IMR-90 (cell line): ENCODE measurements at regions of chr5 and their contacts with region 1.

Region 1: GRCh38 chr5:150469718-150470469 is 20.4 kb upstream of the RPS14 start:
- DNase-seq: peak; percentile 98
- ATAC-seq: peak; percentile 82
- H3K4me3 ChIP-seq: no peak overlapping the region
- H3K27ac ChIP-seq: peak overlapping the region; percentile 81
- H3K4me1 ChIP-seq: peaks cover 26% of the 10 kb centered on the region
- H3K27me3 ChIP-seq: no peaks in the 10 kb centered on the region
- CTCF ChIP-seq: no peak
- POLR2A ChIP-seq: no peak
- RAD21 ChIP-seq: no peak; the same call in 1 of the 2 replicates

Region 2: GRCh38 chr5:150486402-150487198 is 16.7 kb after region 1 on chr5:
- CTCF ChIA-PET with region 1: no interaction called
- POLR2A ChIA-PET with region 1: interaction called, 16 read pairs
- dilution Hi-C with region 1: no loop called
- in situ Hi-C with region 1: no loop called
- intact Hi-C with region 1: loop called (anchors 2 kb)
- DNase-seq: peak; percentile 48
- ATAC-seq: peak; percentile 9
- H3K4me3 ChIP-seq: peak overlapping the region; percentile 99
- H3K27ac ChIP-seq: peak overlapping the region; percentile 100
- H3K4me1 ChIP-seq: peaks cover 40% of the 10 kb centered on the region
- H3K27me3 ChIP-seq: no peaks in the 10 kb centered on the region
- CTCF ChIP-seq: peak; percentile 12; the same call in 1 of the 2 replicates
- POLR2A ChIP-seq: no peak
- RAD21 ChIP-seq: peak; percentile 28; the same call in 1 of the 2 replicates

Region 3: GRCh38 chr5:150517272-150518152 is 47.6 kb after region 1 on chr5:
- CTCF ChIA-PET with region 1: interaction called, 3 read pairs
- POLR2A ChIA-PET with region 1: no interaction called
- dilution Hi-C with region 1: no loop called
- in situ Hi-C with region 1: no loop called
- intact Hi-C with region 1: loop called (anchors 2 kb)
- DNase-seq: peak; percentile 98
- ATAC-seq: peak; percentile 85
- H3K4me3 ChIP-seq: no peak overlapping the region
- H3K27ac ChIP-seq: peak overlapping the region; percentile 36
- H3K4me1 ChIP-seq: peaks cover 31% of the 10 kb centered on the region
- H3K27me3 ChIP-seq: no peaks in the 10 kb centered on the region
- CTCF ChIP-seq: no peak
- POLR2A ChIP-seq: no peak
- RAD21 ChIP-seq: peak; percentile 4; the same call in 1 of the 2 replicates

Region 4: DNA sequence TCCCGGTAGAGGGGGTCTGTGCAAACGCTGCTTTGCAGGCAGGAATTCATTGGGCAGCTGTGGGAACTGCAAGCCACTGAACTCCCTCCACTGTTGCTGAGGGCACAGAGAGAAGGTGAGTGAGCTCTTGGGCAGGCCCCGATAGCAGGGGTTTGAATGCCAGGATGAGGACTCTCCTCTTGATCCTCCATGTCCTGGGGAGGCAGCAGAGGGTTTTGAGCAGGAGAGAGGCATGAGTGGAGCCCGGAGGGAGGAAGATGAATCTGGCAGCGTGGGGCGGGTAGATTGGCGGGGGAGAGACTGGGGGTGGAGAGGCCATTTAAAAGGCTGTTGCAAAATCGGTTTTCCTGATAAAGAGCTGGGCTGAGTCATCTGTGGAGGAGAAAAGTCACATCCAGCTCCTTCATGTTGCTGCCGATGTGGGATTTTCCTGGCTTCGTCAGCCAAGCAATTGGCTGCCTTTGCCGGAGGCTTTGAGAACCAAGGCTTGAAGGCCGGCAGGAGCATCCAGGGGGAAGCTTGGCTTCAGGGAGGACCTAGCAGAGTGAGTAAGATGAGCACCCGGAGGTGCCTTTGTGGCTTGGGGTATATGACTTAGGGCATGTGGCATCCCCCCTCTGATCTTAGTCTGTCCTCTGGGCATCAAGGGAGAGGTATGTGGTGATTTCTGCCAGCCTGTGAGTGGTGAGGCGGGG is 170.6 kb after region 1 on chr5 and contains the start of gene SYNPO:
- CTCF ChIA-PET with region 1: no interaction called
- POLR2A ChIA-PET with region 1: no interaction called
- dilution Hi-C with region 1: no loop called
- in situ Hi-C with region 1: no loop called
- intact Hi-C with region 1: loop called (anchors 5 kb)
- DNase-seq: peak; percentile 98
- ATAC-seq: peak; percentile 44
- H3K4me3 ChIP-seq: peak within 1 kb of the TSS; percentile 50
- H3K27ac ChIP-seq: peak within 1 kb of the TSS; percentile 91
- H3K4me1 ChIP-seq: peaks cover 57% of the 10 kb centered on the region
- H3K27me3 ChIP-seq: no peaks in the 10 kb centered on the region
- CTCF ChIP-seq: 0 out of 2 replicates have a peak, but pooled peaks have one; percentile 2
- POLR2A ChIP-seq: peak; percentile 63; the same call in 1 of the 2 replicates
- RAD21 ChIP-seq: 0 out of 2 replicates have a peak, but pooled peaks have one; percentile 3
- total RNA-seq, gene SYNPO: 3.0 and 3.1 TPM in 2 replicates

Region 5: GRCh38 chr5:150689120-150689519 is 219.2 kb after region 1 on chr5:
- CTCF ChIA-PET with region 1: no interaction called
- POLR2A ChIA-PET with region 1: no interaction called
- dilution Hi-C with region 1: no loop called
- in situ Hi-C with region 1: no loop called
- intact Hi-C with region 1: no loop called
- DNase-seq: no peak
- ATAC-seq: no peak
- H3K4me3 ChIP-seq: no peak overlapping the region
- H3K27ac ChIP-seq: no peak overlapping the region
- H3K4me1 ChIP-seq: no peaks in the 10 kb centered on the region
- H3K27me3 ChIP-seq: no peaks in the 10 kb centered on the region
- CTCF ChIP-seq: no peak
- POLR2A ChIP-seq: no peak
- RAD21 ChIP-seq: no peak

Region 6: DNA sequence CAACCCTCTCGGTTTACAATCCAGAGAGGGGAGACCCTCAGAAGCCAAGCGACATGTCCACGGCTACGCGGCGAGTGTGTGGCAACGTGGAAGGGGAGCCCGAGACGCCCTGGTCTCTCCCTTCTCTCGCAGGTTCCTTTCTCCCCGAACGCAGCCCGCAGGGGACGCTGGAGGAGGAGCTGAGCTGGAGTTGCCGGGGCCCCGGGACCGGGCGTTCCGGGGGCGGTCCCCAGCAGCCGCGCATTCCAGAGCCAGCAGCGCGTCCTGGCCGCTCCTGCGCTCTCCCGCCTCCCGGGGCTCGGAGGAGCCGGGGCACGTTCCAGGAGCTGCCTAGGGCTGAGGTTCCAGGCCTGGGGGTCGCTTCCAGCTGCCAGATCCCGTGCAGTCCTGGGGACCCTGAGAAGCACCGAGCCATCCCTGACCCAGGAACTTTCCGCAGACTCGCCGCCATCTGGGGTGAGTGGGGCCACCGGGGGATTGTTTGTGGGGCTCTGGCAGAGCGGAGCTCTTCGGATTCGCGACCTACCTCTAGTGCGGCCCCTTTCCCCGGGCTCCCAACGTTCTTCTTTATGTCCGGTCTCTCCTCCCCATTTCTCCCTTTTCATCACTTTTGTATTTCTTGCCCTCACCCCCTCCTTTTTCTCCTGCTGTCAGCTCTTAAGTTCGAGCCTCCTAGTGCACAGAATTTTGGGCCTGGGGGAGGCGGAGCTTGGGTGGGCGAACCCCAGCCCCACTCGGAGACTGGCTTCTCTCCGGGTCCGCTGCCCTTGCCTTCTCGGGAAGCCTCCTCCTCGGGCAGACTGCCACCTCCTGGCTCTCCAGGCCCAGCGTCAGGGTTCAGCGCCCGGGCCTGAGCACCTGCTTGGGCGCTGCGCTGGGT is 308.9 kb after region 1 on chr5 and contains the start of gene SMIM3:
- CTCF ChIA-PET with region 1: no interaction called
- POLR2A ChIA-PET with region 1: no interaction called
- dilution Hi-C with region 1: no loop called
- in situ Hi-C with region 1: no loop called
- intact Hi-C with region 1: loop called (anchors 1 kb)
- DNase-seq: peak; percentile 63
- ATAC-seq: peak; percentile 79
- H3K4me3 ChIP-seq: peak within 1 kb of the TSS; percentile 79
- H3K27ac ChIP-seq: peak within 1 kb of the TSS; percentile 88
- H3K4me1 ChIP-seq: peaks cover 27% of the 10 kb centered on the region
- H3K27me3 ChIP-seq: no peaks in the 10 kb centered on the region
- CTCF ChIP-seq: peak; percentile 48
- POLR2A ChIP-seq: peak; percentile 45; the same call in 1 of the 2 replicates
- RAD21 ChIP-seq: peak; percentile 62
- total RNA-seq, gene SMIM3: 36.1 and 37.5 TPM in 2 replicates